B cell (primary cell): ENCODE measurements at regions of chr12 and their contacts with region 1.

Region 1: GRCh38 chr12:53220801-53221202 is 11.2 kb downstream of the RARG start:
- DNase-seq: peak; percentile 92
- ATAC-seq: peak; percentile 76
- H3K4me3 ChIP-seq: peak overlapping the region; percentile 63 to 100 (median 90)
- H3K4me3 Mint-ChIP-seq: peak overlapping the region; percentile 97
- H3K27ac ChIP-seq: peak overlapping the region; percentile 93 to 95
- H3K27ac Mint-ChIP-seq: peak overlapping the region; percentile 98
- H3K4me1 ChIP-seq: peaks cover 39 to 56% of the 10 kb centered on the region in 2 donors
- H3K4me1 Mint-ChIP-seq: peaks cover 53% of the 10 kb centered on the region
- H3K27me3 ChIP-seq: no peaks in the 10 kb centered on the region
- H3K27me3 Mint-ChIP-seq: no peaks in the 10 kb centered on the region
- CTCF ChIP-seq: no peak

Region 2: DNA sequence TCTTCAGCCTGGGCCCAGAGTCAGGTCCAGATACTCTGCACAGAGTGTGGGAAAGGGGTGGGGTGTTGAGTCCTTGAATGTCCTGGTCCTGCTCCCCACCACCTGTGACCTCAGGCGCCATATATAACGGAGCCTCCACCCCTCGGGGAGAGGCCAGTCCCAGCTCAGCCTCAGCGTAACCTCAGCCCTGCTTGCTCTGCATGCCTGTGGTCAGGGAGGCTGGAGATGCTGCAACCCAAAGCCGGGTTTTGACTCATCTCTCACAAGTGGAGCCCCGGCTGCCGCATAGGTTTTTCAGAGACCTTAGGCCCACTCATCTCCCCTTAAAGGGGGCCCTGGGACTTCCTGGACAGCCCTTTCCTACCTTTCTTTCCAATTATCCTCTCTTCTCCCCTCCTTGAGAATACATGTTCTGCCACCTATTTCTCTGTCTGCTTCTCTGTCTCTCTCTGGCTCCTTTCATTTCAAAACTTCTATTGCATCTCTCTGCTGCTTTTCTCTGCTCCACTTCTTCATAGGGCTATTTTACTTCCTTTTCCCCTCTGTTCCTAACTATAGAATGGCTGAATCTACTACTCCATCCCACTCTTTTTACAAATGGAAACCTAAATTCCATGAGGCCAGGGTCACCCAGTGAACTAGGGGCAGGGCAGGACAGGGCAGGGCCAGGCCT is 14.9 kb before region 1 on chr12:
- CTCF ChIA-PET with region 1: interaction called, 201 read pairs
- POLR2A ChIA-PET with region 1: interaction called, 21 read pairs
- intact Hi-C with region 1: loop called (anchors 2 kb)
- DNase-seq: peak; percentile 40
- ATAC-seq: peak; percentile 53
- H3K4me3 ChIP-seq: peak overlapping the region; percentile 68 to 90 (median 73)
- H3K4me3 Mint-ChIP-seq: peak overlapping the region; percentile 82
- H3K27ac ChIP-seq: peak overlapping the region; percentile 65 to 91
- H3K27ac Mint-ChIP-seq: peak overlapping the region; percentile 81
- H3K4me1 ChIP-seq: peaks cover 95 to 99% of the 10 kb centered on the region in 2 donors
- H3K4me1 Mint-ChIP-seq: peaks cover 74% of the 10 kb centered on the region
- H3K27me3 ChIP-seq: no peaks in the 10 kb centered on the region
- H3K27me3 Mint-ChIP-seq: no peaks in the 10 kb centered on the region
- CTCF ChIP-seq: no peak

Region 3: GRCh38 chr12:53258541-53259539 is 38.0 kb after region 1 on chr12:
- CTCF ChIA-PET with region 1: interaction called, 272 read pairs
- POLR2A ChIA-PET with region 1: interaction called, 13 read pairs
- intact Hi-C with region 1: loop called (anchors 1 kb)
- DNase-seq: no peak
- ATAC-seq: no peak
- H3K4me3 ChIP-seq: no peak overlapping the region
- H3K4me3 Mint-ChIP-seq: no peak overlapping the region
- H3K27ac ChIP-seq: peak overlapping the region; percentile 0 to 69
- H3K27ac Mint-ChIP-seq: peak overlapping the region; percentile 70
- H3K4me1 ChIP-seq: peaks cover 40 to 57% of the 10 kb centered on the region in 2 donors
- H3K4me1 Mint-ChIP-seq: peaks cover 39% of the 10 kb centered on the region
- H3K27me3 ChIP-seq: no peaks in the 10 kb centered on the region
- H3K27me3 Mint-ChIP-seq: no peaks in the 10 kb centered on the region
- CTCF ChIP-seq: no peak

Region 4: DNA sequence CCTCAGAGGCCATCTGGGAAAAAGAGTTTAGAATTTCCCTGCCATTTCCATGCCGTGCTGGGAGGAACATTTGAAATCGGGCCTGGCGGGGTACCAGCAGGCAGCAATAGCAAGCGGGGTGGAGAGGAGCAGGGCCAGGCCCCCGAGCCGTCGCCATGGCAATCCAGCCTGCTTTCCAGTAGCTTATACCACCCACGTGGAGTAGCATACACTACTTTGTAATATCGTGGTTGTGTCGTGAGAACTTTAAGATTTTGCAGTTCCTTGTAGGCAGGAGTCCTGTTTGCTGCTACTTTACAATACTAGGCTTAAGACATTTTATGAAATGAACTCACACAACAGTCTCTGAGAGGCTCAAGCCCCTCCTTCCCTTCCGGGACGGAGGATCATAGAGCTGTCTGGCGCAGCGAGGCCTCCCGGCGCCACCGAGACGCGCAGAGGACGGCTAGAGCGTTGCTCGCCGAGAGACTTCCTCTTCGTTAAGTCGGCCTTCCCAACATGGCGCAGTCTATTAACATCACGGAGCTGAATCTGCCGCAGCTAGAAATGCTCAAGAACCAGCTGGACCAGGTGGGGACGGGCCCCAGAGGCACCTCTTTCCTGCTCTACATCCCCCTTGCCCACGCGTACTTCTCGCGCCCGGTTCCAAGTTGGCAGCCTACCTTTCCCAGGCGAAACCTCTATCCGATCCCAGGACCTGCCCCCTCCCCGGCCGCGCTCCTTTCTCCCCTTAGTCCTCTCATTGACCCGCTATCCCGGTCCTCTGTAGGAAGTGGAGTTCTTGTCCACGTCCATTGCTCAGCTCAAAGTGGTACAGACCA is 74.5 kb after region 1 on chr12 and contains the start of gene PFDN5:
- CTCF ChIA-PET with region 1: interaction called, 721 read pairs
- POLR2A ChIA-PET with region 1: interaction called, 11 read pairs
- intact Hi-C with region 1: loop called (anchors 2 kb)
- DNase-seq: peak; percentile 92
- ATAC-seq: peak; percentile 90
- H3K4me3 ChIP-seq: peak within 1 kb of the TSS; percentile 64 to 96 (median 82)
- H3K4me3 Mint-ChIP-seq: peak within 1 kb of the TSS; percentile 100
- H3K27ac ChIP-seq: peak within 1 kb of the TSS; percentile 69 to 86
- H3K27ac Mint-ChIP-seq: peak within 1 kb of the TSS; percentile 99
- H3K4me1 ChIP-seq: peaks cover 26 to 39% of the 10 kb centered on the region in 2 donors
- H3K4me1 Mint-ChIP-seq: peaks cover 50% of the 10 kb centered on the region
- H3K27me3 ChIP-seq: no peaks in the 10 kb centered on the region
- H3K27me3 Mint-ChIP-seq: no peaks in the 10 kb centered on the region
- CTCF ChIP-seq: no peak
- total RNA-seq, gene PFDN5: 627 and 654 TPM in 2 replicates